ENCODE measurements at regions of chr9 and their contacts with region 1.

Region 1: GRCh38 chr9:2620919-2621679 is 488 bp upstream of the VLDLR start:
- DNase-seq: no peak
- ATAC-seq: peak; percentile 46
- H3K4me3 ChIP-seq: peak overlapping the region; percentile 65
- H3K27ac ChIP-seq: no peak overlapping the region
- H3K4me1 ChIP-seq: peaks cover 2% of the 10 kb centered on the region; the same call in 1 of the 2 replicates
- H3K27me3 ChIP-seq: peaks cover 0 to 16% of the 10 kb centered on the region in 2 experiments; a peak in 3 of 4 replicates
- CTCF ChIP-seq: no peak; a peak in 1 of 6 replicates
- EP300 ChIP-seq: no peak
- POLR2A ChIP-seq: peak; percentile 19; the same call in 1 of the 2 replicates
- RAD21 ChIP-seq: no peak

Region 2: DNA sequence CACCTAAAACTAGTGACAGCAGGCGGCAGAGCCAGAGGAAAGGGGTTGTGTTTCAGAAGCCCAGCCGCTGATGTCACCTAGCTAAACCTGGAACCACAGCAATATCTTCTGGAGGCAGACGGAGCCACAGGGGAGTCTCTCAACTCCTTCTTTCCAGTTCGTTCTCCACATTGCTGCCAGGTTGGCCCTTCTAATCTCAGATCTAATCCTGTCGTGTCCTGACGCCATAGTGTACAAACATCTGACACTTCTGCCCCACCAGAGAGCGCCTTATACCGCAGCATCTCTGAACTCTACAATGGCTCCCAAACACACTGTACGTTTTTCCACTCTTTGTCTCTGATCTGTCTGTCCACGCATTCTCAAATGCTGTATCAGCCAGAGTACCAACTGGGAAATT is 366.0 kb before region 1 on chr9:
- CTCF ChIA-PET with region 1: no interaction called
- POLR2A ChIA-PET with region 1: no interaction called
- RAD21 ChIA-PET with region 1: no interaction called
- SMC1A ChIA-PET with region 1: no interaction called
- in situ Hi-C with region 1: no loop called
- intact Hi-C with region 1: loop called (anchors 10 kb)
- DNase-seq: no peak
- ATAC-seq: no peak
- H3K4me3 ChIP-seq: no peak overlapping the region
- H3K27ac ChIP-seq: no peak overlapping the region
- H3K4me1 ChIP-seq: no peaks in the 10 kb centered on the region
- H3K27me3 ChIP-seq: no peaks in the 10 kb centered on the region
- CTCF ChIP-seq: no peak
- EP300 ChIP-seq: no peak
- POLR2A ChIP-seq: no peak
- RAD21 ChIP-seq: no peak

Region 3: DNA sequence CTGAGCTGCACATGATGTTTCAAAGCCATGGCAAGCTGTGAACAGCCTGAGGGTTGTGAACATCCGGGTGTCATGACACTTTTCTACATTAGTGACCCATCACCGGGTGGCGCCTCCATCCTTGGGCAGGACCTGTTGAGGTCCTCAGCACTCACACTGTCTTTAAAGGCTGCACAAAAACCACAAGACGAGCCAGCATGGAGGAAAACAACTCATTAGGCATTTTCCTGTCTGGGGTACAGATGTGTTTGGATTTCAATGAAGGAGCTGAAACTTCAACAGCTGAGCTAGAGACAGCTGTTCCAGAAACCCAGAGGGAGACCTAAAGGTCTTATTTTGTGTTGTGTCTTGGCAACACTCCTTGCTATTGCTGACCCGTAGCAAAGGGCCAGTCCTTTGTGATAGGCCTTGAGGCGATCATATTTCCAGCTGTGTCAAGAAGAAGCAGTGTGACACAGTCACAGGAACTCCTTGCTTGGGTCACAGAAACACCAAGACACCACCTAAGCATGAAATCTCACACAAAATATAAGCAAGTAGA is 151.3 kb before region 1 on chr9:
- CTCF ChIA-PET with region 1: no interaction called
- POLR2A ChIA-PET with region 1: interaction called, 3 read pairs
- RAD21 ChIA-PET with region 1: interaction called, 4 read pairs
- SMC1A ChIA-PET with region 1: interaction called, 4 read pairs
- in situ Hi-C with region 1: no loop called
- intact Hi-C with region 1: loop called (anchors 5 kb)
- DNase-seq: peak; percentile 7
- ATAC-seq: peak; percentile 44
- H3K4me3 ChIP-seq: no peak overlapping the region
- H3K27ac ChIP-seq: no peak overlapping the region
- H3K4me1 ChIP-seq: peaks cover 6% of the 10 kb centered on the region; the same call in 1 of the 2 replicates
- H3K27me3 ChIP-seq: no peaks in the 10 kb centered on the region
- CTCF ChIP-seq: peak in 2 of 3 experiments; percentile 17 to 36; a peak in 3 of 6 replicates
- EP300 ChIP-seq: no peak
- POLR2A ChIP-seq: no peak
- RAD21 ChIP-seq: peak; percentile 59; the same call in 1 of the 2 replicates

Region 4: GRCh38 chr9:2602704-2603116 is 18.4 kb before region 1 on chr9:
- CTCF ChIA-PET with region 1: interaction called, 4 read pairs
- POLR2A ChIA-PET with region 1: interaction called, 5 read pairs
- RAD21 ChIA-PET with region 1: interaction called, 9 read pairs
- SMC1A ChIA-PET with region 1: interaction called, 10 read pairs
- in situ Hi-C with region 1: no loop called
- intact Hi-C with region 1: no loop called
- DNase-seq: peak; percentile 49
- ATAC-seq: peak; percentile 83
- H3K4me3 ChIP-seq: no peak overlapping the region; the same call in 1 of the 2 replicates
- H3K27ac ChIP-seq: peak overlapping the region; percentile 13
- H3K4me1 ChIP-seq: no peaks in the 10 kb centered on the region; the same call in 1 of the 2 replicates
- H3K27me3 ChIP-seq: no peaks in the 10 kb centered on the region
- CTCF ChIP-seq: no peak
- EP300 ChIP-seq: no peak
- POLR2A ChIP-seq: no peak
- RAD21 ChIP-seq: no peak

Region 5: DNA sequence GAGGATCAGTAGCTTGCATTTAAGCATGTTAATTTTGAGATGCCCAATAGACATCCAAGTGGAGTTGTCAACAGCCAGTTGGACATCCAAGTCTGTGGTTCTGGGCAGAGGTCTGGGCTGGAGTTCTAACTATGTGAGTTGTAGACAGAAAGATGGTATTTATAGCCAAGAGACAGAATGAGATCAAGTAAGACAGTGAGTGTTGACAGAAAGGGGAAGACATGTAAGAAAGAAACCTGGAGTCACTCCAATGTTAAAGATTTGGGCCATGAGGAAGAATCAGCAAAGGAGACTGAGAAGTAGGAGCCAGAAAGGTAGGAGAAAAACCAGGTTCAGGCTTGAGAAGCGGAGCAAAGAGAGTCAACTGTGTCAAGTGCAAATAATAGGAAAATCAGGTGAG is 318.3 kb after region 1 on chr9:
- CTCF ChIA-PET with region 1: no interaction called
- POLR2A ChIA-PET with region 1: no interaction called
- RAD21 ChIA-PET with region 1: no interaction called
- SMC1A ChIA-PET with region 1: no interaction called
- in situ Hi-C with region 1: no loop called
- intact Hi-C with region 1: no loop called
- DNase-seq: no peak
- ATAC-seq: no peak
- H3K4me3 ChIP-seq: no peak overlapping the region
- H3K27ac ChIP-seq: no peak overlapping the region
- H3K4me1 ChIP-seq: no peaks in the 10 kb centered on the region
- H3K27me3 ChIP-seq: peaks cover 0 to 2% of the 10 kb centered on the region in 2 experiments; a peak in 1 of 4 replicates
- CTCF ChIP-seq: no peak
- EP300 ChIP-seq: no peak
- POLR2A ChIP-seq: no peak
- RAD21 ChIP-seq: no peak